Heart left ventricle (tissue), 16 donors: ENCODE measurements at regions of chr1 and their contacts with region 1.

Region 1: GRCh38 chr1:21368515-21369289 is 71.2 kb upstream of the NBPF3 start:
- DNase-seq: peak; percentile 80 to 88 (median 83)
- ATAC-seq: peak; percentile 79 to 96 (median 94)
- H3K4me3 ChIP-seq: peak overlapping the region in 1 of 12 donors; percentile 12
- H3K27ac ChIP-seq: peak overlapping the region in 1 of 12 donors; percentile 17
- H3K4me1 ChIP-seq: peaks cover 0 to 12% (median 1%) of the 10 kb centered on the region in 12 donors
- H3K27me3 ChIP-seq: no peaks in the 10 kb centered on the region
- CTCF ChIP-seq: peak; percentile 96 to 100 (median 99)
- POLR2A ChIP-seq: no peak

Region 2: GRCh38 chr1:21324368-21325141 is 44.1 kb before region 1 on chr1:
- intact Hi-C with region 1: no loop called
- DNase-seq: peak; percentile 79 to 92 (median 85)
- ATAC-seq: peak; percentile 65 to 88 (median 78)
- H3K4me3 ChIP-seq: peak overlapping the region in 2 of 12 donors; percentile 0 to 2
- H3K27ac ChIP-seq: peak overlapping the region; percentile 5 to 91 (median 83)
- H3K4me1 ChIP-seq: peaks cover 12 to 90% (median 73%) of the 10 kb centered on the region in 12 donors
- H3K27me3 ChIP-seq: no peaks in the 10 kb centered on the region
- CTCF ChIP-seq: no peak
- POLR2A ChIP-seq: no peak

Region 3: DNA sequence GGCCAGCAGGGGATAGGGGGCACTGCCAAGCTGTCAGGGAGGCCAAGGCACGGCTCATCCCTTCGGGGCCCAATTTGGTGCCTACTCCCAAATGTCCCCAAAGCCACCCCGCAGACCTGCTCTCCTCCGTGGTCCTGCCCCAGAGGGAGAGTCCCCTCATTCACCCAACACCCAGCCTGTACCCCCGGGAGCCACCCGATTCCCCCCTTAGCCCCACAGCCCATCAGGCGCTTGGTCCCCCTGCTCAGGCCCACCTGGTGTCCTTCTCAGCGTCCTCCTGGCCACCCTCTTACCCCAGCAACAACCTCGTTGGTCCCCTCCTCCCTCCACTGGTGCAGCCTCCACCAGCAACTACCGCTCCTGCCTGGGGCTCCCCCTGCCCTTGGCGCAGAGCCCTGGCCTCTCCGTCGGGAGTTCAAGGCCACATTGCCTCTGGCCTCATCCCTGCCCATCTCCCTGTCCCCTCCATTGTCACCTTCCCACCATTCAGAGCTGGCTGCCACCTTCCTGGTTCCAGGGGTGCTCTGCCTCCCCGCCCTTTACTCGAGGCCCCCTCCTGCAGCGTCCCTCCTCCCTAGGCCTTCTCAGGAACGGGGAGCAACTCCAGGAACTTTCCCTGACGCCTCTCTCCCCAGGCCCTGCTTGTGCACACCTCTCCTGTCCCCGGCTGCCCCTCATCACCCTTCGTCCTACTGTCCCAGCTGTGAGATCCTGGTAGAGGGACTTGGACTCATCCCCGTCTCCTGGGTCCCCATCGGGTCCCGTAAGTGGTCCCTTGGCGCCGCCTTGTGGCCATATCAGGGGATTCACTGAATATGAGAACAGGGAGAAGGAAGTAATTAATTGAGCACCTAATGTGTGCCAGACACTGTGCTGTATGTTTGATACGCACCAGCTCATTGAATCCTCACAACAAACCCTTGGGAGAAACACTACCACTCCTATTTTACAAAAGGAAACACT is 226.5 kb after region 1 on chr1:
- intact Hi-C with region 1: loop called in 4 of 10 experiments (anchors 1 to 5 kb)
- DNase-seq: peak; percentile 53 to 80 (median 70)
- ATAC-seq: peak in 2 of 4 donors; percentile 48 to 56
- H3K4me3 ChIP-seq: no peak overlapping the region
- H3K27ac ChIP-seq: no peak overlapping the region
- H3K4me1 ChIP-seq: peaks cover 0 to 7% (median 0%) of the 10 kb centered on the region in 12 donors
- H3K27me3 ChIP-seq: no peaks in the 10 kb centered on the region
- CTCF ChIP-seq: peak; percentile 50 to 71 (median 64)
- POLR2A ChIP-seq: no peak